Caco-2 (cell line): ENCODE measurements at regions of chr1 and their contacts with region 1.

Region 1: DNA sequence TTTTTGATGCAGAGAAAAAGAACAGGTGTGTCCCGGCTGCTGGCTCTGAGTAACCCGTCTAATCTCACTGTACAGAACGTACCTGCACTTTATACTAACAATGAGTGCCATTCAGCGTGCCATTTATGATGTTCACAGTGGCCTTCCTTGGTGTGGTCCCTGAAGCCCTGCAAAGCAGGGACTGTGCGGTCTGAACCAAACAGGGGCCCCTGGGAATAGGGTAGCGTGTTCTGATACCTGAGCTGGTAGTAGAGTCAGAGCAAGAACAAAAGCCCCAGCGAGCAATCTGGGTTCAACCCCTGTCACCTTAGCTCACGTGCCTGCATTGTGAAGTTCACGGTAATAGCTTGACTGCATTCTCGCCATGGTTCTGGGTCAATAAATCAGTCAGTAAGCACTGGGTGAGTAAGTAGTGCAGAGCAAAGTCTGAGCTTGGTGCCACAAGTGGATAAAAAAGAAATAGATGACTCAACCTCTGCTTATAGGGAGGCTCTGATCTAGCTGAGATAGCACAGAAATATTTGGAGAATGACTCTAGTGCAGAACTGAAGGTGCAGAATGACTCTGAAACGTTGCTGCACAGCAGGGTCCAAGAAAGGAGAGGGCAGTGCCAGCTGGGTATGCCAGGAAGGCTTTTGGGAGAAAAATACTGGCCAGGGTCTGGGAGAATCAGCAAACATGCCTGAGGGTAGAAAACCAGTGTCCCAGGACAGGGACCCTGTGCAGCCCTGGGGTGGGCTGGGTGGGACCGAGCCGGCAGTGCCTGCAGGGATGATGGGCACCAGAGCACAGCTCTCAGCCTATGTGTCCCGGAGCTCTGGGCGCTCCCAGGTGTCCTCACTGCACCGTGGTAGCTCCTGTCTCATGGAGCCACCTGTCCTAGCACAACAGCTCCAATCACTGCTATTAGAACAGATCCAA is 125.9 kb downstream of the RHOU start:
- DNase-seq: peak; percentile 82 to 88
- H3K4me3 ChIP-seq: no peak overlapping the region
- H3K4me3 Mint-ChIP-seq: peak overlapping the region; percentile 64
- H3K27ac Mint-ChIP-seq: peak overlapping the region; percentile 88
- H3K4me1 ChIP-seq: peaks cover 60% of the 10 kb centered on the region
- H3K4me1 Mint-ChIP-seq: peaks cover 55% of the 10 kb centered on the region
- H3K27me3 ChIP-seq: no peaks in the 10 kb centered on the region
- H3K27me3 Mint-ChIP-seq: no peaks in the 10 kb centered on the region
- CTCF ChIP-seq: no peak

Region 2: DNA sequence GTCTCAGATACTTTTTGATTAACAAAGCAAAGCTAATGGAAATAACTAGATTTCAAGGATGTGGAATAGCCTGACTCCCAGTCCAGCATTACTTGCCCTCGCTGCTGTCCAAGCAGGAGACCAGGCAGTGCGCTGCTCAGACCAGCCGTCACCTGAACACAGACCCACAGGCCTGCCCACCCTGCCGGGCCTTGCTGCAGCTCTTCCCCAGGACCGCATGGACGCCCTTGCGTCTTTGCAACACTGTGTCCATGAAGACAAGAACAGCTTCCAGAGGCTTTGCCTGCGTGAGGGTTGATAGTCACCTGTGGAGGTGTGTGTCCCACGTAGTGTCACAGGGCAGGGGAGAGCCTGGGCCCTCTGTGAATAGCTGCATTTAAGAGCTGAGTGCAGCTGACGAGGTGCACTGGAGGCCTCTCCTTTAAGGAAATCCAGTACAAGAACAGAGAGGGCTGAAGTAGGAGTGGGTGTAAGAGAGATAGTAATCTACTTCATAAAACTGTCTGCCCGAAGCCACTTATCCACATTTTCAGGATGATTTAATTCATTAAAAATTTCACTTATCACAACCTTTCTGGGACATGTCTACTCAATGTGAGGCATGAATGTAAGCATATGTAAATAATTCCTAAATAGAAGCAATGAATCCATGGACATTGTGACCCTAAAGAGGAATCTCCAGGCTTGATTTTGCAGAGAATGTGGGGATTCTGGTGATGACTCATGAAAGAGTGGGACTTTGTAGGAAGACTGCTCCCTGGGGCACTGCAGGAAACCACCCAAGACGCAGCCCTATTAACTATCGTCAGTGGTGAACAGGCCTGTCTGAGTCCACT is 233.5 kb after region 1 on chr1:
- CTCF ChIA-PET with region 1: no interaction called
- POLR2A ChIA-PET with region 1: no interaction called
- intact Hi-C with region 1: loop called (anchors 10 kb)
- DNase-seq: no peak
- H3K4me3 ChIP-seq: no peak overlapping the region
- H3K4me3 Mint-ChIP-seq: no peak overlapping the region
- H3K27ac Mint-ChIP-seq: peak overlapping the region; percentile 75
- H3K4me1 ChIP-seq: peaks cover 45% of the 10 kb centered on the region
- H3K4me1 Mint-ChIP-seq: peaks cover 54% of the 10 kb centered on the region
- H3K27me3 ChIP-seq: no peaks in the 10 kb centered on the region
- H3K27me3 Mint-ChIP-seq: no peaks in the 10 kb centered on the region
- CTCF ChIP-seq: no peak